ENCODE measurements at regions of chr13 and their contacts with region 1.

Region 1: DNA sequence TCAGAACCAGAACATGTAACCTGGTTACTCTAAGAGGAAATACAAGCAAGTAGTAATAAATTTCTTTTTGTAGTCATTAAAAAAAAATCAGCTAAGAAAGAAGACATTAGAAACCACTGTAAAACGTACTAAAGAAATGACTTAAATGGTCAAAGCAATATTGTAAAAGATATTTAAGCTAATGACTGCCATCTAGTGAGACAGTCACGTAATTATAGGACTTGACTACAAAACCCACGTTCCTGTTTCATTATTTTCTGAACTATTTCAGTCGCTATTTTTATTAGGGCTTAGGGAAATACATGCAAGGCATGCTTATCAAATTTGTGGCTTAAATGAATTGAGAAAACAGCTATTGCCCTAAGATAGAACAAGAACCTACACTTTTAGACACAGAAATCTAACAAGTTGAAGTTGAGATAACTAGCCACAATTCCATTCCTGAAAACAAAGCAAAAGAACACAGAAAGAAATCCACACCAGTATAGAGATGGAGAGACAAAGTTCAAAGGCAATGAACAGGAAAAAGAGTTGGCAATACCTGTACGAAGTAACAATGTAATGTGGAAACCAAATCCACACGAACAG is 17.9 kb downstream of the ALG5 start:
- DNase-seq: no peak
- H3K4me3 Mint-ChIP-seq: no peak overlapping the region
- H3K27ac Mint-ChIP-seq: no peak overlapping the region
- H3K4me1 Mint-ChIP-seq: peaks cover 2% of the 10 kb centered on the region
- H3K27me3 Mint-ChIP-seq: no peaks in the 10 kb centered on the region

Region 2: DNA sequence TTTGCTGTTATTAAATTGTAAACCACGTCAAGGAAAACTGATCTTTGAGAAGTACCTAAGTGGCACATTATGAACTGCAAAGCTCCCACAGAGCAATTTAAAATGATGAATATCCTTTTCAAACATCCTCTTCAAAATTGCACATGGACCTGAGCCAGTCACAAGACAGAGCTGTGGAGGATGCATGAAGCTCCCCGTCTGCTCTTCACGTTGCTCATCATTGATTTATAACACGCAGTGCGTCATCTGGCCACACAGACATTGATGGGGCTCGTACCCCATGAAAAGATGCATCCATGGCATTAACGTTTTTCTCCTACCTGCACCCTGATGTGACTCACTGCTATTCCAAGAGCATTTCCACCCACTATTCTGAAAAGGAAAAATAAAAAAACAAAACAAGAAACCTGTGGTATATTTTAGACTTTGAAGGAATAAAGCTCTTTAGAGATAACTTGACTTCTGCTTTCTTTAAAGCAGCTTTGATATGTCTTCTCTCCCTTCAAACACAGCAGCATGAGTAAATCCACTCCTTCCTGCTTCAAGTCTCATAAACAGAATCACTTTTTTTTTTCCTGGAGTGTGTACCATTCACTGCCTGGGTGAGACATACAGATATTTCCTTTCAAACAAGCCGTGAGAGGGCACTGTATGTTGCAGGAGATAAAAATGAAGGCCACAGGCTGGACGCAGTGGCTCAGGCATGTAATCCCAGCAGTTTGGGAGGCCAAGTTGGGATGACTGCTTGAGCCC is 314.6 kb before region 1 on chr13:
- CTCF ChIA-PET with region 1: no interaction called
- intact Hi-C with region 1: no loop called
- DNase-seq: no peak
- H3K4me3 Mint-ChIP-seq: no peak overlapping the region
- H3K27ac Mint-ChIP-seq: no peak overlapping the region
- H3K4me1 Mint-ChIP-seq: no peaks in the 10 kb centered on the region
- H3K27me3 Mint-ChIP-seq: peaks cover 17% of the 10 kb centered on the region

Region 3: GRCh38 chr13:36712770-36713169 is 268.5 kb before region 1 on chr13:
- CTCF ChIA-PET with region 1: no interaction called
- intact Hi-C with region 1: no loop called
- DNase-seq: no peak
- H3K4me3 Mint-ChIP-seq: no peak overlapping the region
- H3K27ac Mint-ChIP-seq: no peak overlapping the region
- H3K4me1 Mint-ChIP-seq: no peaks in the 10 kb centered on the region
- H3K27me3 Mint-ChIP-seq: peaks cover 25% of the 10 kb centered on the region

Region 4: DNA sequence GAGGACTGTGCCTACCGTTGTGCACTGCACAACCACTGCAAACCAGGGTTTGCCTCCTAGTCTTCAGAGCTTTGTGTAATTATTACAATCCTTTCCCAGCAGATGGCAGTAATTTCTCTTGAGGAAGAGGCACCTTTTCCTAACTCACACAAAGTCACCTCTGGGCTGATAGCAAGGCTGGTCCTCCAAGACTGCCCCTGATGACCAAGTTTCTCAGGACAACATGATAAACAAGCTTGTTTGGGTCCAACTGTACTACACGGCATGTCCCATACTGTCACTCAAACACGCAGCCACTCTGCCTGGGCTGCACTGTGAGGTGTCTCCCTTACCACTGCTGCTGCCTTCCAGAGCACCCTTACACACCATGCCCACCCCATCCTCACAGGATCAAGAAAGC is 123.0 kb before region 1 on chr13:
- CTCF ChIA-PET with region 1: interaction called, 10 read pairs
- intact Hi-C with region 1: loop called (anchors 1 kb)
- DNase-seq: no peak
- H3K4me3 Mint-ChIP-seq: no peak overlapping the region
- H3K27ac Mint-ChIP-seq: no peak overlapping the region
- H3K4me1 Mint-ChIP-seq: peaks cover 2% of the 10 kb centered on the region
- H3K27me3 Mint-ChIP-seq: peaks cover 27% of the 10 kb centered on the region

Region 5: DNA sequence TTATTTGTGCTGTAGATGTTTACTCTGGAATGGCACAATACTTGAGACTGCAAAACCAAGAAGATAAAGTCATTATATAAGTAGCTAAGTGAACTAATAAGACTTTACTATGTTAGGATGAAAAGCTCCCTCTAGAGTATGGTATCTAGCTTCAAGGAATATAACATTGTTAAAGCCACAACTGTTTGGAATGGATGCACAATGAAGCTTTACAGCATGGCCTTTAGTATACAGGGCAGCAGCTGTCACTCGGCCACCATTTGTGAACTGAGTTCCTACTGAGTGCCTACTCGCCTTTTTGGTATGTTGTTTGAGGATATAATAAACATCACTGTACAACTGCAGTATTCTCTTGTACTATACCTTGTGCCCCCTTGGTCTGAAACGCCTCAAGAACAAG is 11.1 kb after region 1 on chr13:
- CTCF ChIA-PET with region 1: interaction called, 14 read pairs
- intact Hi-C with region 1: no loop called
- DNase-seq: no peak
- H3K4me3 Mint-ChIP-seq: no peak overlapping the region
- H3K27ac Mint-ChIP-seq: no peak overlapping the region
- H3K4me1 Mint-ChIP-seq: peaks cover 12% of the 10 kb centered on the region
- H3K27me3 Mint-ChIP-seq: no peaks in the 10 kb centered on the region